Caco-2 (cell line): ENCODE measurements at regions of chr10 and their contacts with region 1.

Region 1: DNA sequence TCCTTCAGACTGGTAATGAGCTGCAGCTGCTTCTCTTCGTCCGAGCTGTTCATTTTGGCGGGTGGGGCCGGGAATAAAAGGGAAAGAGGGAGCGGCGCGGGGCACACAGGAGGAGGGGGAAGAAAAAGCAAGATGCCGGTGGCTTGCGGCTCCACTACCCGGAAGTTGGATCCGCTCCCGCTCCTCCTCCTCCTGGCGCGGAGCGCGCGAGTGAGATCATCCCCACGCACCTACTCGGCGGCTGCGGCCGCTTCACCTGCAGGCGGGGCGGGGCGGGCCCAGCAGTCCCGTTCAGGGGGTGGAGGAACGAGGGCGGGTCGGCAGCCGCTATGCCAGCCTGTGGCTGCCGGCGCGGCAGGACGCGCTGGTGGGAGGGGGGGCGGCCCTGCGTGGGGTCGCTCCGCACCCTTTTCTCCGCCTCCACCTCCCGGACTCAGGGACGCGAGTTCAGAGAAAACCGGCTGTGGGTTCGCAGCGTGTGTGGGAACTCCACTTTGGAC is at the start of gene SHTN1:
- DNase-seq: peak; percentile 94 to 95
- H3K4me3 ChIP-seq: peak within 1 kb of the TSS; percentile 69
- H3K4me3 Mint-ChIP-seq: peak within 1 kb of the TSS; percentile 77
- H3K27ac Mint-ChIP-seq: peak within 1 kb of the TSS; percentile 93
- H3K4me1 ChIP-seq: peaks cover 17% of the 10 kb centered on the region
- H3K4me1 Mint-ChIP-seq: peaks cover 13% of the 10 kb centered on the region
- H3K27me3 ChIP-seq: no peaks in the 10 kb centered on the region
- H3K27me3 Mint-ChIP-seq: no peaks in the 10 kb centered on the region
- CTCF ChIP-seq: no peak
- total RNA-seq, gene SHTN1: 80.8 and 86.9 TPM in 2 replicates

Region 2: DNA sequence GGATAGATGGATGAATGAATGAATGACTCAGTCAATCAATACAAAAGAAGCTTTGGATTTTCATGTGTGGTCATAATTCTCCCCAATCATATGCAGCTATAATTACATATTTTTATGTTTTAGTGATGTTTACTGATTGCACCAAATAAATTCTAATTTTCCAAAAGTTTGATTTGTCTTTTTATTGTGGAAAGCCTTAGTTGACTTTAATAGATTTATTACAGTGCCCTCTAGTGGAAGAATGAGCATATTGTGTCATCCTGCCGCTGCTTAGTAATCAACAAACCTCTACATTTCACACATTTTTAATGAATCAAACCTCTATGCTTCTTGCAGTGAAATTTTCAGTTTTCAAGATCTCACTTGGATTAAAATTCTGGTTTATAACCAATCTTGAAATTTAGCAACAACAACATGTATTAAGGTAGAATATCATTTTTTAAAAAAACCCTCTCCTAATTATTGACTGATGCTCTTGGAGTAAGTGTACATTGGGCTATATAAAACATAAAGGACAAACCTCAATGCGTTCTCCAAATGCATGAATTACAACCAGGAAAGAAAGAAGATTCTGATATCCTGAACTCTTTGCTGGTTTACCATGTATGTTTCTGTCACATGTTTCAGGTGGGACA is 514.9 kb before region 1 on chr10:
- CTCF ChIA-PET with region 1: no interaction called
- POLR2A ChIA-PET with region 1: no interaction called
- intact Hi-C with region 1: no loop called
- DNase-seq: no peak
- H3K4me3 ChIP-seq: no peak overlapping the region
- H3K4me3 Mint-ChIP-seq: no peak overlapping the region
- H3K27ac Mint-ChIP-seq: no peak overlapping the region
- H3K4me1 ChIP-seq: no peaks in the 10 kb centered on the region
- H3K4me1 Mint-ChIP-seq: no peaks in the 10 kb centered on the region
- H3K27me3 ChIP-seq: no peaks in the 10 kb centered on the region
- H3K27me3 Mint-ChIP-seq: peaks cover 6% of the 10 kb centered on the region
- CTCF ChIP-seq: peak; percentile 48 to 56

Region 3: GRCh38 chr10:116849248-116850057 is 155.6 kb before region 1 on chr10 and contains the start of gene ENO4:
- CTCF ChIA-PET with region 1: no interaction called
- POLR2A ChIA-PET with region 1: no interaction called
- intact Hi-C with region 1: loop called (anchors 5 kb)
- DNase-seq: peak; percentile 85 to 89
- H3K4me3 ChIP-seq: peak within 1 kb of the TSS; percentile 68
- H3K4me3 Mint-ChIP-seq: peak within 1 kb of the TSS; percentile 80
- H3K27ac Mint-ChIP-seq: peak within 1 kb of the TSS; percentile 34
- H3K4me1 ChIP-seq: no peaks in the 10 kb centered on the region
- H3K4me1 Mint-ChIP-seq: peaks cover 26% of the 10 kb centered on the region
- H3K27me3 ChIP-seq: no peaks in the 10 kb centered on the region
- H3K27me3 Mint-ChIP-seq: peaks cover 8% of the 10 kb centered on the region
- CTCF ChIP-seq: no peak
- total RNA-seq, gene ENO4: not detected in 2 replicates

Region 4: DNA sequence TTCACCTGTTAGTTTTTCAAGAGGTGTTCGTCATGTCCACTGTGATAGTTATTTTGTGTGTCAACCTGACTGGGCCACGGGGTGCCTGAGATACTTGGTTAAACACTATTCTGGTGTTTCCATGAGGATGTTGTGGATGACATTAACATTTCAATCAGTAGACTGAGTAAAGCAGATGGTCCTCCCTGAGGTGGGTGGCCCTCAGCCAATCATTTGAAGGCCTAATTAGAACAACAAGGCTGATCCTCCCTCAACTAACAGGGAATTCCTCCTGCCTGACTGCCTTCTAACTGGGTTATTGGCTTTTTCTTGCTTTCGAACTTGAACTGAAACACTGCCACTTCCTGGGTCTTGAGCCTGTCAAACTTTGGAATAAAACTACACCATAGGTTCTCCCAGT is 80.0 kb before region 1 on chr10:
- CTCF ChIA-PET with region 1: no interaction called
- POLR2A ChIA-PET with region 1: no interaction called
- intact Hi-C with region 1: no loop called
- DNase-seq: no peak
- H3K4me3 ChIP-seq: no peak overlapping the region
- H3K4me3 Mint-ChIP-seq: no peak overlapping the region
- H3K27ac Mint-ChIP-seq: no peak overlapping the region
- H3K4me1 ChIP-seq: no peaks in the 10 kb centered on the region
- H3K4me1 Mint-ChIP-seq: no peaks in the 10 kb centered on the region
- H3K27me3 ChIP-seq: no peaks in the 10 kb centered on the region
- H3K27me3 Mint-ChIP-seq: no peaks in the 10 kb centered on the region
- CTCF ChIP-seq: no peak

Region 5: DNA sequence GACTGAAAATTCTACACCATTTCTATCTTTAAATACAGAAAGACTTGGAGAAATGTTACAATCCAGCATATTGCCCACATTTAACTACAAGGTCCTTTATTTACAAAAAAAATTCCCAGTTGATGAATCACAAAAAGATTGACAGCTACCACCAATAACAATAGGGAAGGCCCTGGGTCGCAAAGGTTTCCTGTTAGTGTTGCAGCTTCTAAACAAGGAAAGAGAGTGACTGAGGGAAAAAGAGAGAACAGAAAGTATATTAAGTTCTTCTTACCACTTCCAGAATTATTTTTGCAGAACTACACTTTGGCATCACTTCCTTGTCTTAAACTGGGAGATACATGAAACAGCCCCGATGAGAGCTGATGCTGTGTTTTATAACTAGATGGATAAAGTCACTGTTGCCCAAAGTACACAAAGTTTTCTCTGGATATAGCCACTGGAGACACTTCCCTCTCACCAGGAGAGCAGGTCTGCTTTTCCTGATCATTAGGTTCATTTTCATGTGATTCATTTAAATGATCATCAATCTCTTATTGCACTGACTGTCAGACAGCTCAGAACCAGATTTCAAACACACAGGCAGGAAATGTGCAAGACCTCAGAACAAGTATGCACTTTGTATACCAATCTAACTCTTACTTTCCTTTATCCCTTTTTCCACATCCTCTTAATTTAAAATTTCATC is 57.1 kb before region 1 on chr10:
- CTCF ChIA-PET with region 1: interaction called, 4 read pairs
- POLR2A ChIA-PET with region 1: interaction called, 3 read pairs
- intact Hi-C with region 1: loop called (anchors 5 kb)
- DNase-seq: peak in 1 of 2 experiments; percentile 21
- H3K4me3 ChIP-seq: no peak overlapping the region
- H3K4me3 Mint-ChIP-seq: no peak overlapping the region
- H3K27ac Mint-ChIP-seq: peak overlapping the region; percentile 42
- H3K4me1 ChIP-seq: peaks cover 18% of the 10 kb centered on the region
- H3K4me1 Mint-ChIP-seq: peaks cover 15% of the 10 kb centered on the region
- H3K27me3 ChIP-seq: no peaks in the 10 kb centered on the region
- H3K27me3 Mint-ChIP-seq: no peaks in the 10 kb centered on the region
- CTCF ChIP-seq: no peak

Region 6: DNA sequence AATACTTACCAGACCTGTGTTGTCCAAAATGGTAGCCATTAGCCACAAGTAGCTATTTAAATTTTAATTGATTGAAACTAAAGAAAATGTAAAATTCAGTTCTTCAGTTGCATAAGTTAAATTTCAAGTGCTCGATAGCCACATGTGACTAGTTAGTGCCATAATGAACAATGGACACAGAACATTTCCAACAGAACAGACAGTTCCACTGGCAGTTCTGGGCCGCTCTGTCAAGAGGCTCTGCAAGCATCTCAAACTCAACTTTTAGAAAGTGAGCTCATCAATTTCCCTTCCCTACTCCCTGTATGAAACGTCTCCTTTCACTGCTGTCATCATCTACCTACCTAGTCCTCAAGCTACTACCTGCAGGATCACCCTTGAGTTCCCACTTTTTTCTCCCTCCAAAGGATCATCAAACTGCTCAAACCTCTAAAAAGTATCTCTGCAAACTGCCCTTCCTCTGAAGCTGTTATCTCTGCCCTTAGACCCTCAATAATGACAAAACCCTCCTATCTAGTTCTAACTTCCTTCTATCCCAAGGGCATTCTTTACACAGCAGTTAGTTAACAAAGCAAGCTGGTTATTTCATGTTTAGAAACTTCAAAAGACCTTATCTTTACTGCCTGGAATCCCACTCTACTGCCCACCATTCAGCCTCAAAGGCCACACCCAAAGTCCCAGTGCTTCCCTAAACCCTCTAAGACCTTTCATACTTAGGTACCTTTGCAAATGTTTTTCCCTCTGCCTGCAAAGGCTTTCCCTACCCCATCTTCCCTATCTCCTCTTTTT is 20.7 kb before region 1 on chr10:
- CTCF ChIA-PET with region 1: interaction called, 4 read pairs
- POLR2A ChIA-PET with region 1: interaction called, 10 read pairs
- intact Hi-C with region 1: loop called (anchors 1 kb)
- DNase-seq: peak; percentile 68 to 78
- H3K4me3 ChIP-seq: no peak overlapping the region
- H3K4me3 Mint-ChIP-seq: peak overlapping the region; percentile 39
- H3K27ac Mint-ChIP-seq: peak overlapping the region; percentile 63
- H3K4me1 ChIP-seq: peaks cover 56% of the 10 kb centered on the region
- H3K4me1 Mint-ChIP-seq: peaks cover 45% of the 10 kb centered on the region
- H3K27me3 ChIP-seq: no peaks in the 10 kb centered on the region
- H3K27me3 Mint-ChIP-seq: no peaks in the 10 kb centered on the region
- CTCF ChIP-seq: no peak

Region 7: GRCh38 chr10:117126034-117126433 is 121.0 kb after region 1 on chr10:
- CTCF ChIA-PET with region 1: no interaction called
- POLR2A ChIA-PET with region 1: no interaction called
- intact Hi-C with region 1: no loop called
- DNase-seq: no peak
- H3K4me3 ChIP-seq: no peak overlapping the region
- H3K4me3 Mint-ChIP-seq: no peak overlapping the region
- H3K27ac Mint-ChIP-seq: no peak overlapping the region
- H3K4me1 ChIP-seq: no peaks in the 10 kb centered on the region
- H3K4me1 Mint-ChIP-seq: peaks cover 5% of the 10 kb centered on the region
- H3K27me3 ChIP-seq: no peaks in the 10 kb centered on the region
- H3K27me3 Mint-ChIP-seq: peaks cover 17% of the 10 kb centered on the region
- CTCF ChIP-seq: no peak

Region 8: DNA sequence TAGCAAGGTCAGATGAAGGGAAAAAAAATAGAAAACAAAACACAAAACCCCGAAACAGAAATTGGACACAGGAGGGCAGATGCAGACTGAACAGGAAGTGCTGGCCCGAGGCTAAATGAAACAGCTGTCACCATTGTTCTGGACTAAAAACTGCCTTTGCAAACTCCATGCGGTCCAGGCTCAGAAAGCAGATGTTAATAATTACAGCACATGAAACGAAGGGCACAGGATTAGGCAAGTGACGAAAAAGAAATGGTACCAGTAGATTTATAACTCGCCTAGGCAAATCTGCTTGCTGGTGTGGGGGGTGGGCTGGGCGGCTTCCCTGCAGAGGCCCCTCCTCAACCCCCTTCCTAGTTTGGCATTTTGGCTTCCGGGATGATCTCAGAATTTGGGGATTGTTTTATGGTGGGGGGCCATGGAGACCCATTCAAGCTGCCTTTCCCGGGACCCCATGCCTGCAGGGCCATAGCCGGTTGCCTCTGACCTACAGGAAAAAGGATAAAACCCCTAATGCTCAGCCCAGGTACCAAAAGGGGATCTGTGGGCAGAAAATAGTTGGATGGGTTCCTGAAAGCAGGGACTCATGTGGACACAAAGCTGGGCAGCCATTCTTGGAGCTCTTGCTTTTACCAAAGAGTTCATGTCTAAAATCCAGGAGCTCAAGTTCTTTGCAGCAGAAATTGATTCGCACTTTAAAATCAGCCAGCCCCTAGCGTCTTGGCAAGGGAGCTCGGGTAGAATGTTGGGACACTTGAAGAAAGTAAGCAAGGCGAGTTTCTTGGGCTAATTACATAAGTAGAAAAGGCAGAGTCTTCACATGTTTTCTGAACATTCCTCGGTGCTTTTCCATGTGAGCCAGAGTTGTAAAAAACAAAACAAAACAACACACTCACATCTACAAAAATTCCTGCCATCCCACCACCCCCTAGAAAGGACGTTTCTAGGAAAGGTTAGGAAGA is 498.4 kb after region 1 on chr10:
- CTCF ChIA-PET with region 1: no interaction called
- POLR2A ChIA-PET with region 1: no interaction called
- intact Hi-C with region 1: no loop called
- DNase-seq: no peak
- H3K4me3 ChIP-seq: no peak overlapping the region
- H3K4me3 Mint-ChIP-seq: no peak overlapping the region
- H3K27ac Mint-ChIP-seq: no peak overlapping the region
- H3K4me1 ChIP-seq: peaks cover 10% of the 10 kb centered on the region; the same call in 1 of the 2 replicates
- H3K4me1 Mint-ChIP-seq: no peaks in the 10 kb centered on the region
- H3K27me3 ChIP-seq: no peaks in the 10 kb centered on the region
- H3K27me3 Mint-ChIP-seq: no peaks in the 10 kb centered on the region
- CTCF ChIP-seq: no peak